Heart right ventricle (tissue), 16 donors: ENCODE measurements at regions of chr1 and their contacts with region 1.

Region 1: DNA sequence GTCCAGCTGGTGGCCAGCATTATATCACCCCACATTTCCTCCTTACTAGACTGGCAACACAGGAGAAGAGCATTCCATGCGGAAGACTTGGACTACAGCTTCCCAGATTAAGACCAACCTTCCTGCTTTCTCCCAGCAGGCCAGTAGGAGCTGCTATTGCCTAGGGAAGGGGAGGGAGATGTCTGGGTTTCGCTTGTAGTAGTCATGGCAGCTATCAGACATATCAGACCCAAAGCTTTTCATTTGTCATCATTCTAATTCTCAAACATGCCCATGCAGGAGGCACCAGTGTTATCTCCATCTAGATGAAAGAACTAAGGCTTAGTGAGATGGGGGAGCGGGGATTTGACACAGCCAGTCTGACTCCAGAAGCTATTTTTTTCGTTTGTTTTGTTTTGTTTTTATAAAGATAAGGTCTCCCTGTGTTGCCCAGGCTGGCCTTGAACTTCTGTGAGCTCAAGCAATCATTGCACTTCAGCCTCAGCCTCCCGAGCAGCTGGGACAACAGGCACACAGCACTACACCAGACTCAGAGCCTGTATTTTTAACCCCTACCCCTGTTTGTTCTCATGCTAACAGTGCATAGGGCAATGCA is 4.5 kb downstream of the PLA2G2A start:
- DNase-seq: peak; percentile 24 to 63
- ATAC-seq: peak; percentile 81 to 91 (median 87)
- H3K4me3 ChIP-seq: peak overlapping the region in 1 of 10 donors; percentile 4
- H3K27ac ChIP-seq: peak overlapping the region in 3 of 10 donors; percentile 5 to 36 (median 20)
- H3K4me1 ChIP-seq: peaks cover 0 to 20% (median 6%) of the 10 kb centered on the region in 9 donors
- H3K27me3 ChIP-seq: peaks cover 0 to 9% (median 2%) of the 10 kb centered on the region in 7 donors
- CTCF ChIP-seq: peak; percentile 60 to 89 (median 79)

Region 2: GRCh38 chr1:19661721-19662228 is 313.1 kb before region 1 on chr1:
- intact Hi-C with region 1: no loop called
- DNase-seq: no peak
- ATAC-seq: no peak
- H3K4me3 ChIP-seq: no peak overlapping the region
- H3K27ac ChIP-seq: no peak overlapping the region
- H3K4me1 ChIP-seq: peaks cover 3 to 24% (median 6%) of the 10 kb centered on the region in 9 donors
- H3K27me3 ChIP-seq: peaks cover 21 to 49% (median 40%) of the 10 kb centered on the region in 7 donors
- CTCF ChIP-seq: peak; percentile 54 to 84 (median 78)

Region 3: DNA sequence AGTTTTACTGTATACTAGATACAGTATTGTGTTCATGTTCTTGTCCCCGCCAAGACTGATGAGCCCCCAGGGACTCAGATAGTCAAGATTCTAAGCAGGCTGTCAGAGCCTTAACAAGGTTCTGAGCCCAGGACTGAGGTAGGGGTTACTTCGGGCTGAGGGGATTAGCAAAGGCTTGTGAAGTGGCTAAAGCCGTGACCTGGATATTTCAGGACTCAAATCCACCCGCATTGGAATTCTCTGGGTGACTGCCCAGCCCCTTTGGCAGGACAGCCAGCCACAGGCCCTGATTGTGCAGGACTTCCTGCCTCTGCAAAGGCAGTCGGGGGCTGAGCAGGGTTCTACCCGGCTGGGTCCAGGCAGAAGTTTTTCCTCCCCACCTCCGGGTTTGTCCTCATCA is 95.0 kb after region 1 on chr1 and contains the start of gene PLA2G5:
- intact Hi-C with region 1: loop called in 1 of 10 experiments (anchors 10 kb)
- DNase-seq: peak; percentile 82 to 88
- ATAC-seq: peak; percentile 88 to 96 (median 94)
- H3K4me3 ChIP-seq: peak within 1 kb of the TSS; percentile 20 to 63 (median 49)
- H3K27ac ChIP-seq: peak within 1 kb of the TSS; percentile 71 to 91 (median 88)
- H3K4me1 ChIP-seq: peaks cover 5 to 60% (median 44%) of the 10 kb centered on the region in 9 donors
- H3K27me3 ChIP-seq: no peaks in the 10 kb centered on the region
- CTCF ChIP-seq: no peak
- total RNA-seq, gene PLA2G5: 31.5 to 58.2 (median 49.3) TPM

Region 4: DNA sequence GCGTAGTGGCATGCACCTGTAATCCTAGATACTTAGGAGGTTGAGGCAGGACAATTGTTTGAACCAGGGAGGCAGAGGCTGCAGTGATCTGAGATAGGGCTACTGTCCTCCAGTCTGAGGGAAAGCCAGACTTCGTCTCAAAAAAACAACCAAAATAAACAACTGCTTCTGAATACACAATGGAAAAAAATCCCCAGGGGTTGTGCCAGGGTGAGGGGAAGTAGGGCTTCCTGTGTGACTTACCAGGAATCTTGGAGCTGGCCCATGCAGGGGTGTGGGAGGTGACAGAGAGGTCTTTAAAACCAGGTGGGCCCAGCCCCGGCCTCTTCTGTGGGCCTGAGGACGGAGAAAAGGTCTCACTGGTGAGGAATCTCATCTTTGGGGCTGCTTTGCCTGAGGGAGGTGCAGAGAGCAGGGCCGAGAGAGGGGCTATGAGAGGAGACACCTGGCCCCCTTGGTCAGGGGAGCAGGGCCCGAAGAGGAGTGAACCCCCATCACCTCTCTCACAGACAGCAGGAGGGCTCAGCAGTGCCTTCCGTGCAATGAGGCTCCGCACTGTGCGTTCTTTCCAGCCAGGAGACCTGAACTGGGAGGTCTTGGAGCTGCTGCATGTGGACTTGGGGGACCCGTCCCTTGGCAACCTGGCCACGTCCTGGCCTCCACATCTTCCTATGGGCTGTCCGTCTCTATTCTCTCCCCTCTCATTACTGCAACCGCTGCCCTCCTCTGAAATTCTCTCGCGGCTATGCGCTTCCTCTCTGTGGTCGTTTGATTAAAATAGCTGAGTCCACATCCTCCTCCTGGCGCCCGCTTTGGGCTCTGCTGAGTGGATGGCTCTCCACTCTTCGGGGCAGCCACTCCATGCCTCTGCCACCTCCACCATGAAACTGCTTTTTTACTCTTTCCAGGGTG is 105.8 kb after region 1 on chr1:
- intact Hi-C with region 1: loop called in 2 of 10 experiments (anchors 10 kb)
- DNase-seq: no peak
- ATAC-seq: peak in 4 of 8 donors; percentile 23 to 52 (median 40)
- H3K4me3 ChIP-seq: no peak overlapping the region
- H3K27ac ChIP-seq: peak overlapping the region in 9 of 10 donors; percentile 21 to 49 (median 32)
- H3K4me1 ChIP-seq: peaks cover 3 to 70% (median 15%) of the 10 kb centered on the region in 9 donors
- H3K27me3 ChIP-seq: peaks cover 0 to 17% (median 0%) of the 10 kb centered on the region in 7 donors
- CTCF ChIP-seq: no peak

Region 5: DNA sequence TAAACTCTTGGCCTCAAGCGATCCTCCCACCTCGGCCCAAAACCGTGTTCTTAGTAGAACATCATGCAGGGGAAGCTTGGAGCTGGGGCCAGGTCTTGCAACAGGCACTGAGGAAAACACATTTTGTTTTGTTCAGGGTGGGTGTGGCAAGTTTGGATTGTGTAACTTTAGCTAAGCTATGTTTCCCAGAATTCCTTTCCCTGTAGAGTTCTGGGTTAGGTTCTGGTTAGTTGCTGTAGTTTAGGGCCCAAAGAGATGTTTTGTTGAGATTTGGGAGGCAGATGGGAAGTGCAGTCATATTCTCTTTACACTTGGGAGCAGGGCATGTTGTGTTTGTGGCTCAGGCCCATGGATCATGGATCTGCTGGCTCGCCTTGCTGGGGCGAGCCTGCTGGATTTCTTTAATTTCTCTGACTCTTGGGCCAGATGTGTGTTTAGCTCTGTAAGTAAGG is 119.0 kb after region 1 on chr1:
- intact Hi-C with region 1: loop called in 3 of 10 experiments (anchors 5 to 10 kb)
- DNase-seq: peak; percentile 44 to 60
- ATAC-seq: peak; percentile 70 to 91 (median 82)
- H3K4me3 ChIP-seq: no peak overlapping the region
- H3K27ac ChIP-seq: peak overlapping the region in 9 of 10 donors; percentile 32 to 70 (median 57)
- H3K4me1 ChIP-seq: peaks cover 0 to 6% (median 0%) of the 10 kb centered on the region in 9 donors
- H3K27me3 ChIP-seq: no peaks in the 10 kb centered on the region
- CTCF ChIP-seq: no peak

Region 6: GRCh38 chr1:20151906-20152598 is 177.1 kb after region 1 on chr1:
- intact Hi-C with region 1: loop called (anchors 2 to 5 kb)
- DNase-seq: peak; percentile 83 to 87
- ATAC-seq: peak; percentile 89 to 96 (median 93)
- H3K4me3 ChIP-seq: peak overlapping the region; percentile 1 to 53 (median 44)
- H3K27ac ChIP-seq: peak overlapping the region in 4 of 10 donors; percentile 29 to 73 (median 48)
- H3K4me1 ChIP-seq: peaks cover 3 to 27% (median 15%) of the 10 kb centered on the region in 9 donors
- H3K27me3 ChIP-seq: peaks cover 0 to 20% (median 0%) of the 10 kb centered on the region in 7 donors
- CTCF ChIP-seq: peak; percentile 91 to 97 (median 95)

Region 7: GRCh38 chr1:20194757-20195461 is 220.0 kb after region 1 on chr1:
- intact Hi-C with region 1: loop called in 5 of 10 experiments (anchors 5 to 10 kb)
- DNase-seq: peak; percentile 60 to 76
- ATAC-seq: peak; percentile 72 to 82 (median 76)
- H3K4me3 ChIP-seq: peak overlapping the region in 1 of 10 donors; percentile 32
- H3K27ac ChIP-seq: no peak overlapping the region
- H3K4me1 ChIP-seq: peaks cover 0 to 21% (median 4%) of the 10 kb centered on the region in 9 donors
- H3K27me3 ChIP-seq: peaks cover 0 to 35% (median 13%) of the 10 kb centered on the region in 7 donors
- CTCF ChIP-seq: peak; percentile 51 to 90 (median 82)